Panc1 (cell line): ENCODE measurements at regions of chr2 and their contacts with region 1.

Region 1: DNA sequence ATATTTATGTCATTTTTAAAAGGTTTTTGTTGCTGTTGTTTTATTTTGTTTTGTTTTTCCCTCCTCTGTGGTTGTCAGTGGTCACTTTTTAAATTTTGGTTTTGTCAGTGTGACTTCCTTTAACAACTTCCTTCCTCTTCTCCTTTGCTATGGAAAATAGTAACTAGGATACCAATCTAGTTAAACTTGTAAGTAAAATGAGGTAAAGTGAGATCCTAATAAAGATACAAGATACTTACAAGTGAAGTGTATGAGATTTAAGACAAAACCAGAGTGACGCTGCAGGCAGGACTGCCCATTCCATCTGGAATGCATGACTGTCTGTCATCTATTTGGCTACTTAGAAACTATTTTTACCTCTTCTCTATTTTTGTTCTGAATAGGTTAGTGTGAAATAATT is 30.6 kb upstream of the CREB1 start:
- DNase-seq: no peak
- ATAC-seq: no peak
- H3K4me3 ChIP-seq: no peak overlapping the region
- H3K27ac ChIP-seq: no peak overlapping the region
- H3K4me1 ChIP-seq: no peaks in the 10 kb centered on the region
- H3K27me3 ChIP-seq: no peaks in the 10 kb centered on the region
- CTCF ChIP-seq: no peak

Region 2: DNA sequence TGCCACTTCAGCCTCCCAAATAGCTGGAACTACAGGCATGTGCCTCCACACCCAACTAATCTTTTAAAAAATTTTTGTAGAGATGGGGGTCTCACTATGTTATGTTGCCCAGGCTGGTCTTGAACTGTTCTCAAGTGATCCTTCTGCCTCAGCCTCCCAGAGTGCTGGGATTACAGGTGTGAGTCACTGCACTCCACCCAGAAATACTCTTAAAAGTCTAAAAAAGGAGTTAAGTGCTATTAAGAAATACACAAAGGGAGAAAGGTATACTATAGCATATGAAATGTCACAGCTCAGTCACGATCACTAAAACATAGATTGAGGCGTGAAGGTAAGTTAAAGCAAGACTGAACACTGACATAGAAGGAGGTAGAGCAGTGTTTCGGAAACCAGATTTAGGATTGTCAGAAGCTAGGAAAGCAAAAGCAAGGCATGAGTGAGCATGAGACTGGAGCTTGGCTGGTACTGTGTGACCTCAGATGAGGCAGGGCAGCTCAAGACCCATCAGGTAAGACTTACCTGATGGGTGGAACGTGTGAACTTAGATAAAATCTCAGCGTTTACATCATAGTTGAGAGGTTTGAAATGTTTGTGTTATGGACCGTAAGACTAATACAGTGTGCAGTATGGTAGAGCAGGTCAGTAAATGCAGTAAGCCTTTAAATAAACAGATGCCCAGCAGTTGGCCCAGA is 221.5 kb after region 1 on chr2:
- CTCF ChIA-PET with region 1: interaction called, 12 read pairs
- POLR2A ChIA-PET with region 1: no interaction called
- in situ Hi-C with region 1: no loop called
- intact Hi-C with region 1: no loop called
- DNase-seq: no peak
- ATAC-seq: 0 out of 2 replicates have a peak, but pooled peaks have one; percentile 20
- H3K4me3 ChIP-seq: no peak overlapping the region
- H3K27ac ChIP-seq: no peak overlapping the region
- H3K4me1 ChIP-seq: peaks cover 9% of the 10 kb centered on the region; the same call in 1 of the 2 replicates
- H3K27me3 ChIP-seq: no peaks in the 10 kb centered on the region
- CTCF ChIP-seq: no peak